H1 (cell line): ENCODE measurements at regions of chr6 and their contacts with region 1.

Region 1: DNA sequence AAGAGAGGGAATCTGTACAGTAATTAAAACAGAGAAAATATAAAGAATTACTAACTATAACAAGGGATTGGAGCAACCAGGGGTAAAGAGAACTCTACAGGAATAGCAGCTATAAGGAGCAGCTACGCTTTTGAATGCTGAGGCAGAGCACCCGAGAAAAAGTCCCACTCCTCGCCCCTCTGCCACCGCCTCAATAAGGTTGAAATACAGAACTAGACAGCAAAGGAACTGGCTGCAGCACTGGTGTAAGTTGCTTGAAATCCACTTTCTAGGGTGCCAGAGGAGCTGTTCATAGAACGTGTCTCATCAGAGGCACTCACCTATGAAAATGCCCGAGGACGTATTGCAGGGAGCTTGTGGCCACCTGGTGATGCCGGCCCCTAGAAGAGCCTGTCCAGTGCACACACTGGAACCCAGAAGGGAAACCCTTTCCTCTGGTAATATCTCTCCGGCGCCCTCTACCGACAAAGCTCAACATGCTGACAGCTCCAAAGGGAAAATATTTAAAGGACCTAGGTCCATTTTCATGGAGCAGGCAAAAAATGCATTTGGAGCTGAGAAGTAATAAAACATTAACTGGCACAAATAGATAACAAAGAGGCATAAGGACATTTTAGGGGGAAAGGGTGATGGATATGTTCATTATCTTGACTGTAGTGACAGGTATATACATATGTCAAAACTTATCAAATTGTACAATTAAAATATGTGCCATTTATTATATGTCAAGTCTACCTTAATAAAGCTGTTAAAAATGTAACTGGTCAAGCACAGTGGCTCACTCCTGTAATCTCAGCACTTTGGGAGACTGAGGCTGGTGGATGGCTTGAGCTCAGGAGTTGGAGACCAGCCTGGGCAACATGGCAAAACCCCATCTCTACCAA is 137.4 kb upstream of the HDAC2 start:
- DNase-seq: peak in 1 of 2 experiments; percentile 87
- H3K4me3 ChIP-seq: no peak overlapping the region
- H3K27ac ChIP-seq: no peak overlapping the region
- H3K4me1 ChIP-seq: no peaks in the 10 kb centered on the region
- H3K27me3 ChIP-seq: no peaks in the 10 kb centered on the region
- CTCF ChIP-seq: peak; percentile 47 to 76 (median 73)
- EP300 ChIP-seq: no peak
- POLR2A ChIP-seq: no peak
- RAD21 ChIP-seq: peak; percentile 69 to 79

Region 2: GRCh38 chr6:113970805-113971676 is 137.3 kb before region 1 on chr6 and contains the start of gene HDAC2:
- CTCF ChIA-PET with region 1: interaction called, 12 read pairs
- POLR2A ChIA-PET with region 1: no interaction called
- DNase-seq: peak; percentile 57 to 92
- H3K4me3 ChIP-seq: peak within 1 kb of the TSS; percentile 84 to 99 (median 88)
- H3K27ac ChIP-seq: peak within 1 kb of the TSS; percentile 99
- H3K4me1 ChIP-seq: peaks cover 0 to 9% (median 3%) of the 10 kb centered on the region in 4 experiments; a peak in 2 of 7 replicates
- H3K27me3 ChIP-seq: peaks cover 0 to 3% (median 1%) of the 10 kb centered on the region in 4 experiments; a peak in 2 of 7 replicates
- CTCF ChIP-seq: peak in 2 of 3 experiments; percentile 3 to 20; a peak in 2 of 4 replicates
- EP300 ChIP-seq: peak in 1 of 2 experiments; percentile 98; a peak in 2 of 3 replicates
- POLR2A ChIP-seq: peak; percentile 32 to 40; a peak in 2 of 3 replicates
- RAD21 ChIP-seq: peak; percentile 13 to 29; a peak in 1 of 4 replicates
- total RNA-seq, gene HDAC2: 374 and 383 TPM in 2 replicates

Region 3: DNA sequence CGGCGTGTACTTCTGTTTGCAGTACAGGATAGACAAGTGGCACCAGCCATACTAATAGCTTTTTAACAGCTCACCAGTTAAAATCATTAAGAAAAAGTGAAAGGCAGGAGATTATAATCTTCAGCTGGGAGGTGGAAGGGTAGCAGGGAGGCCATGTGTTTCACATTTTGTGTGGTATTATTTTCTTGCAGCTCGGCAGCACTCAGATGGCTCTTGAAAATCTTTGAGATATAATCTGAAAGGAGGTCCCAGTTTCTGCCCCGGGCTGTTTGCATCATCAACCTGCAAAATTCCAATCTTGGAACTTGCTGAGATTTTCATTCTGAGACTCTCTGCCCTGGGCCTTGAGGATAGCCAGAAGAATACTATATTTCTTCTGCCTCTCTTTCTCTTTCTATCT is 49.9 kb before region 1 on chr6:
- CTCF ChIA-PET with region 1: interaction called, 10 read pairs
- POLR2A ChIA-PET with region 1: no interaction called
- DNase-seq: no peak
- H3K4me3 ChIP-seq: no peak overlapping the region
- H3K27ac ChIP-seq: no peak overlapping the region
- H3K4me1 ChIP-seq: no peaks in the 10 kb centered on the region
- H3K27me3 ChIP-seq: no peaks in the 10 kb centered on the region
- CTCF ChIP-seq: no peak
- EP300 ChIP-seq: no peak
- POLR2A ChIP-seq: no peak
- RAD21 ChIP-seq: no peak

Region 4: DNA sequence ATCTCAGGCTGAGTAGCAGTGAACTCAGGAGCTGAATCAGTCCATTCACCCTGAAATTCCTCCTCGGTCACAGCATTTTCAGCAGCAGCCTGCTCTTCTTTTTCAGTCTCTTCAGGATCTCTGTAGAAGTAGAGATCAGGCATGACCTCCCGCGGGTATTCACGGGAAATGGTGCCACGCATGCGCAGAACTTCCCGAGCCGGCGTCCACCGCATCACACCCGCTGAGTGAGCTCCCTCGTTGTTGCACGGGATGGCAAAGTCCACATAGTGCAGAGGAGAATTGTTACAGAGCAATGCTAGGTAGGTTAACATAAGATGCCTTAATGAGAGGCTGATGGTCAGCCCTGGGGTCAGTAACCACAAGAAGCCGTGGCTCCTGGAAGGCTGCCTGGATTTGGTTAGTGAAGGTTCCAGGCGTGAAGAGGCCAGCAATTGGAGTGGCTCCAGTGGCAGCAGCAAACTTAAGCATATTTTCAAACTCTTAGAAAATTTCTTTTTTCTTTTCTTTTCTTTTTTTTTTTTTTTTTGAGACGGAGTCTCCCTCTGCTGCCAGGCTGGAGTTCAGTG is 24.0 kb before region 1 on chr6:
- CTCF ChIA-PET with region 1: interaction called, 18 read pairs
- POLR2A ChIA-PET with region 1: no interaction called
- DNase-seq: no peak
- H3K4me3 ChIP-seq: no peak overlapping the region
- H3K27ac ChIP-seq: no peak overlapping the region
- H3K4me1 ChIP-seq: peaks cover 0 to 4% (median 1%) of the 10 kb centered on the region in 4 experiments; a peak in 1 of 7 replicates
- H3K27me3 ChIP-seq: no peaks in the 10 kb centered on the region
- CTCF ChIP-seq: no peak
- EP300 ChIP-seq: no peak
- POLR2A ChIP-seq: no peak
- RAD21 ChIP-seq: no peak

Region 5: GRCh38 chr6:114121913-114122645 is 13.7 kb after region 1 on chr6:
- CTCF ChIA-PET with region 1: interaction called, 29 read pairs
- POLR2A ChIA-PET with region 1: no interaction called
- DNase-seq: no peak
- H3K4me3 ChIP-seq: no peak overlapping the region
- H3K27ac ChIP-seq: no peak overlapping the region
- H3K4me1 ChIP-seq: peaks cover 0 to 7% (median 3%) of the 10 kb centered on the region in 4 experiments; a peak in 5 of 7 replicates
- H3K27me3 ChIP-seq: no peaks in the 10 kb centered on the region
- CTCF ChIP-seq: no peak
- EP300 ChIP-seq: no peak
- POLR2A ChIP-seq: no peak
- RAD21 ChIP-seq: no peak

Region 6: DNA sequence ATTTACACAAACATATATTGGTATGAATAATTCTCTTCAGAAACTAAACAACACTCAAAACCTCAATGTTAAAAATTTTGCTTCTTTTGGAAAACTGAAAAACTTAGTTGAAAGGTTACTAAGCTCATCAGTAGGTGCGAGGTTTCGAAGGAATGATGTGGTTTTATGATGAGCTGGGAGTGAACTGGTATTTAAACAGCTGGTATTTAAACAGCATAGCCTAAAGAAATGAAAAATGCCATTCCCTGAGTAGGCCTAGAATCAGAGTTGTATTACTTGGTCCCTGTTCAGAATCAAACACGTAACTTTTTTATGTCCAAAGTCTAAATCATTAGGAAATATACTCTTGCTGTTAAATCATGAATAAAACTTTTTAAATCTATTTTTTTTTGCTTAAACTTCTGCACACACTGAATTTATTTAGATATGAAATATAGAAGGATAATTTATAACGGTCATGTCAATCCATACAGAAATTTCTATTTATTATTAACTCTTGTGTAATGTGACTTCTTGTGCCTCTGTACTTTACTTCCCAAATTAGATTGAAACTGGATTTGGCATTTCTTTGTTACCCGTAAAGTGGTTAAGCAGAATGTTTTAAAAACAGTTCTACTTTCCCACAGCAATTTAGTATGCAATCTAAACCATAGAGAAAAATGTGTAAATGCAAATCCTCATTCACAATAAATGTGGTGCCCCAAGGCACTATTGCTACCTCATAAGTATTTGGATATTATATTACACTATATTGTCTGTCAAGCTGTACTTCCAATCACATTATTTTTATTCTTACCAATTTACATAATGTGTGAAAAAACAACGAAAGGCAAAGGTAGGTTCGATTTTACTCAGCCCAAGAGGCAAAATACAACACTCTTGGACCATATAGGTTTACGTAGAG is 110.3 kb after region 1 on chr6:
- CTCF ChIA-PET with region 1: interaction called, 12 read pairs
- POLR2A ChIA-PET with region 1: no interaction called
- DNase-seq: no peak
- H3K4me3 ChIP-seq: no peak overlapping the region
- H3K27ac ChIP-seq: no peak overlapping the region
- H3K4me1 ChIP-seq: peaks cover 0 to 4% (median 0%) of the 10 kb centered on the region in 4 experiments; a peak in 1 of 7 replicates
- H3K27me3 ChIP-seq: no peaks in the 10 kb centered on the region
- CTCF ChIP-seq: no peak
- EP300 ChIP-seq: no peak
- POLR2A ChIP-seq: no peak
- RAD21 ChIP-seq: no peak